HepG2 (cell line): ENCODE measurements at regions of chr11 and their contacts with region 1.

Region 1: GRCh38 chr11:20243974-20244373 is 83.7 kb upstream of the DBX1 start:
- DNase-seq: no peak
- ATAC-seq: no peak
- H3K4me3 ChIP-seq: no peak overlapping the region
- H3K27ac ChIP-seq: no peak overlapping the region
- H3K4me1 ChIP-seq: no peaks in the 10 kb centered on the region
- H3K27me3 ChIP-seq: peaks cover 1 to 19% of the 10 kb centered on the region in 2 experiments; a peak in 3 of 5 replicates
- CTCF ChIP-seq: no peak
- EP300 ChIP-seq: no peak
- POLR2A ChIP-seq: no peak
- RAD21 ChIP-seq: no peak

Region 2: DNA sequence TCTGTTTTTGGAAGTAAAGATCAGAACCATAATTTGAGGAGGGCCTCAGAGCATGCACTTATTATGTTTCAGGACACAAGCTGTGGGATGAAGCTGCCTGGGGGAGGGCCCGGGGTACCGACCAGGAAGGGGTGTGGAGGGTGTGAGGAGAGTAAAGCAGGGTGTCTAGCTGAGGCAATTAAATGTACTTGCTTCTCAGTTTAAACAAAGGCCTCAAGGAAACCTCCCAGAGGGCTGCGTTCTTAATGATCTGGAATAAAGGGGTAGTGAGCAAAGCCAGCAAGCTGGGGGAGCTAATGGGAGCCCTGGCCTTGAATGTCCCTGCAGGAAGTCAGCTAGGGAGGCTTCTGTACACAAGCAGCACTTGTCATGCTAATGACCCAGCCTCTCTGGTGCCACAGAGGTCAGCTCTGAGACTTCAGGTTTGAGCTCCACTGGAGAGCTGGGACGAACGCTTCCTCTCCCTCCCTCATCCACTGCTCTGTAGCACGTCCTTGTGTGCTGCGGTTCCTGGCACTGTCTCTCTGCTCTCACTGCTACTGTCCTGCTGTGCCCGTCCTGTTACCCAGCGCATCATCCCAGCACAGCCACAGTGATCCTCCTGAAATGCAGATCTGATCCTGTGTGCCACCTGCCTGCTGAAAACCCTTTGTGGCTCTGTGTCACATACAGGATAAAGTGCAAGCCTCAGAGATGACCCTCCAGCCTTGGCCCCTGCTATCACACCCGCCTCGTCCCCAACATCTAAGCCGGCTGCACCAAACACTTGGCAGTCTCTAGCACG is 243.4 kb before region 1 on chr11:
- CTCF ChIA-PET with region 1: no interaction called
- POLR2A ChIA-PET with region 1: no interaction called
- in situ Hi-C with region 1: no loop called
- intact Hi-C with region 1: no loop called
- DNase-seq: peak; percentile 88
- ATAC-seq: peak; percentile 74
- H3K4me3 ChIP-seq: peak overlapping the region; percentile 18 to 65 (median 28); a peak in 5 of 6 replicates
- H3K27ac ChIP-seq: peak overlapping the region; percentile 86
- H3K4me1 ChIP-seq: peaks cover 75% of the 10 kb centered on the region
- H3K27me3 ChIP-seq: no peaks in the 10 kb centered on the region
- CTCF ChIP-seq: peak; percentile 28; the same call in 1 of the 2 replicates
- EP300 ChIP-seq: peak in 1 of 2 experiments; percentile 68; a peak in 2 of 4 replicates
- POLR2A ChIP-seq: peak; percentile 38 to 55; a peak in 2 of 4 replicates
- RAD21 ChIP-seq: peak; percentile 22; the same call in 1 of the 2 replicates

Region 3: DNA sequence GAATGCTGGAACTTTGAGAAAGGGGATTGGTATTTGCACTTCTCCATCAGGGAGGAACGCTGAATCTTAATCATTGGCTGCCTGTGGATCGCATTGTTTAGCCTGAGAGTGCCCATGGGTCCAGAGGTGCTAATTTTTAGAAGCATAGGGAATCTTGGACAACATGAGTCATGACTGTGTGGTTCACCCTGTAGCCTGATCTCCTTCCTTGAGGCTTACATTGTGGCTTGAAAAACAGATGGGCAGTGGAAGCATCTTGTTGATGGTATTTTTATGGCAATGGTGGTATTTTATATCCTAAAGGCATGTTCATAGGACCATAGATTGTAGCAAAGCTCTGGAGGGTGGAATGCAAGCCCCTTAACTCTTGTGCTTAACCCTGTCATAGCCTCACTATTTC is 15.5 kb after region 1 on chr11:
- CTCF ChIA-PET with region 1: no interaction called
- POLR2A ChIA-PET with region 1: no interaction called
- in situ Hi-C with region 1: no loop called
- intact Hi-C with region 1: no loop called
- DNase-seq: no peak
- ATAC-seq: no peak
- H3K4me3 ChIP-seq: no peak overlapping the region
- H3K27ac ChIP-seq: no peak overlapping the region
- H3K4me1 ChIP-seq: no peaks in the 10 kb centered on the region
- H3K27me3 ChIP-seq: no peaks in the 10 kb centered on the region; a peak in 1 of 5 replicates
- CTCF ChIP-seq: no peak
- EP300 ChIP-seq: no peak
- POLR2A ChIP-seq: no peak
- RAD21 ChIP-seq: no peak

Region 4: DNA sequence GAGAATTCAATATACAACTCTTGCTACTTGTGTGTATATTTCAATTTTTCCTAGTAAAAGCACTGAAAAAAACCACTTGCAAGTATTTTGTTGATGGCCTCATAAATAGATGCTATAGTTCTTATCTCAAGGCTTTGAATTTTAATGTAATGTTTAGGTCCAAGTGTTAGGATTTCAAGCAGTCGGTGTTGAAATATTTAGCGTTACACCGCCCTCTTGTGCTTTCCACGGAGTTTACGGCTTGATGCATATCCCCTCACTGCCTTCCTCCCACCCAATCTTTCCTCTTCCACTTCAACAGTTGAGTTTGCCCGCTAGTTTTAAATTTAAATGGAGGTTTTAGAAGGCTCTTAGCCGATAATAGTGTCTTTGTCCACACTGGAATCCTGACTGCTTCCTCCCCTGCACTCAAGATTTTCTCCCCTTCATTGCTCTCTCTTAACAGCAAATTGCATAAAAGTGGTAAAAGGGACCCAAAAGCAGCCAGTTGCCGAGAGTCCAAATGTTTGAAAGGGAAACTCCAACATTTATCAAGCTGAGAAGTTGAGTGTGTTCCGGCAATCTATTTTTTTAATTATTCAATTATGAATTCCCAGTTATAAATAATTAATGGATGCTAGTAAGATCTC is 93.7 kb after region 1 on chr11:
- CTCF ChIA-PET with region 1: interaction called, 8 read pairs
- POLR2A ChIA-PET with region 1: no interaction called
- in situ Hi-C with region 1: no loop called
- intact Hi-C with region 1: loop called (anchors 1 kb)
- DNase-seq: peak; percentile 18
- ATAC-seq: peak; percentile 87
- H3K4me3 ChIP-seq: no peak overlapping the region
- H3K27ac ChIP-seq: no peak overlapping the region
- H3K4me1 ChIP-seq: peaks cover 6% of the 10 kb centered on the region; the same call in 1 of the 2 replicates
- H3K27me3 ChIP-seq: no peaks in the 10 kb centered on the region; a peak in 2 of 5 replicates
- CTCF ChIP-seq: peak; percentile 52
- EP300 ChIP-seq: no peak
- POLR2A ChIP-seq: no peak
- RAD21 ChIP-seq: peak; percentile 28; the same call in 1 of the 2 replicates

Region 5: GRCh38 chr11:20355221-20356219 is 111.5 kb after region 1 on chr11:
- CTCF ChIA-PET with region 1: interaction called, 10 read pairs
- POLR2A ChIA-PET with region 1: no interaction called
- in situ Hi-C with region 1: loop called (anchors 5 kb)
- intact Hi-C with region 1: loop called (anchors 1 kb)
- DNase-seq: peak; percentile 78
- ATAC-seq: peak; percentile 93
- H3K4me3 ChIP-seq: peak overlapping the region in 2 of 3 experiments; percentile 34 to 46; a peak in 2 of 6 replicates
- H3K27ac ChIP-seq: peak overlapping the region; percentile 25
- H3K4me1 ChIP-seq: peaks cover 49% of the 10 kb centered on the region
- H3K27me3 ChIP-seq: no peaks in the 10 kb centered on the region
- CTCF ChIP-seq: peak; percentile 63
- EP300 ChIP-seq: no peak
- POLR2A ChIP-seq: no peak
- RAD21 ChIP-seq: no peak

Region 6: GRCh38 chr11:20934516-20934915 is 690.5 kb after region 1 on chr11:
- CTCF ChIA-PET with region 1: no interaction called
- POLR2A ChIA-PET with region 1: no interaction called
- in situ Hi-C with region 1: no loop called
- intact Hi-C with region 1: no loop called
- DNase-seq: no peak
- ATAC-seq: no peak
- H3K4me3 ChIP-seq: no peak overlapping the region
- H3K27ac ChIP-seq: no peak overlapping the region
- H3K4me1 ChIP-seq: no peaks in the 10 kb centered on the region
- H3K27me3 ChIP-seq: no peaks in the 10 kb centered on the region
- CTCF ChIP-seq: no peak
- EP300 ChIP-seq: no peak
- POLR2A ChIP-seq: no peak
- RAD21 ChIP-seq: no peak